PC-9 (cell line): ENCODE measurements at regions of chr7 and their contacts with region 1.

Region 1: DNA sequence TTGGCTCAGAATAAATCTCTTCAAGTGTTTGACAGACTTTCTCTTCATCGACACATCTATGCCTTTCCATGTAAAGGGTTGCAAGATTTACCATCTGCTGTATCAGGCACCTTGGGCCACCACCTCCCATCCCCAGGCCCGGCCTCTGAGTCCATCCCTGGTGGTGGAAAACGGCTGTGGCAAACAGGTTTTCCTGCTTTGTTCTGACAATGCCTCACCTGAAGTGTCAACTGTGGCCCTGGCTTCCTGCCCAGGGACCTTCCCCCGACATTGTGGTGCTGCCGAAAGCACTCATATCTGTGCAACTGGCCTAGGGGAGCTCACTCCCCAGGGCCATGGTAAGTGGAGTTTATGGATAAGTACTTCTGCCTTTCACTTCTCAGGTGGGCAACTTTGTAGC is 174.4 kb downstream of the ACTR3B start:
- DNase-seq: peak in 1 of 2 experiments; percentile 5
- H3K4me3 ChIP-seq: no peak overlapping the region
- H3K27ac ChIP-seq: no peak overlapping the region
- H3K4me1 ChIP-seq: no peaks in the 10 kb centered on the region
- H3K27me3 ChIP-seq: peaks cover 84% of the 10 kb centered on the region
- CTCF ChIP-seq: no peak

Region 2: GRCh38 chr7:152902054-152902453 is 31.9 kb before region 1 on chr7:
- CTCF ChIA-PET with region 1: interaction called, 10 read pairs
- POLR2A ChIA-PET with region 1: no interaction called
- intact Hi-C with region 1: no loop called
- DNase-seq: no peak
- H3K4me3 ChIP-seq: no peak overlapping the region
- H3K27ac ChIP-seq: no peak overlapping the region
- H3K4me1 ChIP-seq: peaks cover 15% of the 10 kb centered on the region
- H3K27me3 ChIP-seq: peaks cover 51% of the 10 kb centered on the region
- CTCF ChIP-seq: no peak